ENCODE measurements at regions of chr4 and their contacts with region 1.

Region 1: GRCh38 chr4:88033309-88033708 is 25.9 kb downstream of the PKD2 start:
- DNase-seq: peak; percentile 54
- CTCF ChIP-seq: peak; percentile 62

Region 2: GRCh38 chr4:87657525-87657924 is 375.8 kb before region 1 on chr4:
- in situ Hi-C with region 1: no loop called
- DNase-seq: no peak
- CTCF ChIP-seq: no peak

Region 3: GRCh38 chr4:88158489-88159243 is 125.4 kb after region 1 on chr4 and contains the start of gene ABCG2:
- in situ Hi-C with region 1: no loop called
- DNase-seq: peak; percentile 60
- CTCF ChIP-seq: no peak

Region 4: DNA sequence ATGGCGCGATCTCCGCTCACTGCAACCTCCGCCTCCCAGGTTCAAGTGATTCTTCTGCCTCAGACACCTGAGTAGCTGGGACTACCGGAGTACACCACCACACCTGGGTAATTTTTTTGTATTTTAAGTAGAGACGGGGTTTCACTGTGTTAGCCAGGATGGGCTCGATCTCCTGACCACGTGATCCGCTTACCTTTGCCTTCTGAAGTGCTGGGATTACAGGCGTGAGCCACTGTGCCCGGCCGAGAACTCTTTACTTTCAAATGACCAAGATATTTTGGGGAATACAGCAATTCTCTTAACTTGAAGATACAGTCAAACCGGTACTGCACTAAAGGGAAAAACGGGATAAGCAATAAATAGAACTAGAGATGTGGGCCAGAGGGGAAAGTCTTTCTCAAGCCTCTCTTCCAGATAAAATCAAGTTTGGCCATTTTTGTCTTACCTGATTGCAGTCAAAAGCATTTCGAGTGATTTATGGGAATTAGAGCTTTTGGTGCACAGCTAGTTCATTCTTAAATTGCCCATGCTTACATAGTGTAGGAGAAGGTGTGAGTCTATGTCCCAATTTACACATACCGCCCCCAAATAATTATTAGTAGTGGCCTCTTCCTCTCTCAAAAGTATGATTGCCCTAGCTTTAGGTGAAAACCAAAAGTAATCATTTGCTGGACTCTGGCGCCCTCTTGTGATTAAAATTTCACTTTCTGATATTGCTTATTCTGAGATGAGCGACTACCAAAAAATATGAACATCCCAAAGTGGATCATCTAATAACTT is 178.4 kb after region 1 on chr4:
- in situ Hi-C with region 1: loop called (anchors 10 kb)
- DNase-seq: peak; percentile 55
- CTCF ChIP-seq: peak; percentile 62

Region 5: DNA sequence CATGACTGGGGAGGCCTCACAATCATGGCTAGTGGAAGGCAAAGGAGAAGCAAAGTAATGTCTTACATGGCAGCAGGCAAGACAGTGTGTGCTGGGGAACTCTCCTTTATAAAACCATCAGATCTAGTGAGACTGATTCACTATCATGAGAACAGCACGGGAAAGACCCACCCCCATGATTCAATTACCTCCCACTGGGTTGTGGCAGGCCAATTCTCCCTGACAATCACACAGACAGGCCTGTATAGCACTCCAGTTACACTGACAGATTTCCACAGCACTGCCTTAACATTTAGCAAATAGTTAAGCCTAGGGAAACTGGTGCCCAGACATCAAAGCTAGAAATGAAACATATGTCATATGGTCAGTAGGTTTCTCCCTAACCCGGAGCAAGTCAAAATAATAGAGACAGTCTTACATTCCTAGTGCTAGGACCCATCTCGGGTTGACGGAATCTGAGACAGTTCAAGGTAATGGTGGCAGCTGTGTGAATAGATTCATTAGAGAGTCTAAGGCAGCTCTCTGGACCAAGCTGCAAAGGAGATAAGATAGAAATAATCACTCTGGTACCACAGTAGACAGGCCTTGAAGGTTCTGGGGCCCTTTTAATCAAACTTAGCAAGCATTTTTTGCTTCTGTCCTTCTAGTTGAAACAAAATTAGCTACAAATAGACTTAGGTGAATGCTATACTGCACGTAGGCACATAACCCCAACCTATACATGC is 414.2 kb after region 1 on chr4:
- in situ Hi-C with region 1: no loop called
- DNase-seq: no peak
- CTCF ChIP-seq: no peak

Region 6: GRCh38 chr4:88523325-88524129 is 490.2 kb after region 1 on chr4 and contains the start of gene PYURF:
- in situ Hi-C with region 1: loop called (anchors 25 kb)
- DNase-seq: peak; percentile 89
- CTCF ChIP-seq: no peak

Measured in GM13976 (cell line).